Activated CD4-positive, alpha-beta T cell treated with anti-CD3 and anti-CD28 coated beads for 36 hours (primary cell): ENCODE measurements at regions of chr3 and their contacts with region 1.

Region 1: GRCh38 chr3:98657457-98657856 is 64.0 kb upstream of the CPOX start:
- DNase-seq: peak; percentile 79
- ATAC-seq: peak; percentile 88
- H3K4me3 Mint-ChIP-seq: no peak overlapping the region
- H3K27ac Mint-ChIP-seq: no peak overlapping the region
- H3K4me1 Mint-ChIP-seq: peaks cover 3% of the 10 kb centered on the region
- H3K27me3 Mint-ChIP-seq: peaks cover 16% of the 10 kb centered on the region

Region 2: DNA sequence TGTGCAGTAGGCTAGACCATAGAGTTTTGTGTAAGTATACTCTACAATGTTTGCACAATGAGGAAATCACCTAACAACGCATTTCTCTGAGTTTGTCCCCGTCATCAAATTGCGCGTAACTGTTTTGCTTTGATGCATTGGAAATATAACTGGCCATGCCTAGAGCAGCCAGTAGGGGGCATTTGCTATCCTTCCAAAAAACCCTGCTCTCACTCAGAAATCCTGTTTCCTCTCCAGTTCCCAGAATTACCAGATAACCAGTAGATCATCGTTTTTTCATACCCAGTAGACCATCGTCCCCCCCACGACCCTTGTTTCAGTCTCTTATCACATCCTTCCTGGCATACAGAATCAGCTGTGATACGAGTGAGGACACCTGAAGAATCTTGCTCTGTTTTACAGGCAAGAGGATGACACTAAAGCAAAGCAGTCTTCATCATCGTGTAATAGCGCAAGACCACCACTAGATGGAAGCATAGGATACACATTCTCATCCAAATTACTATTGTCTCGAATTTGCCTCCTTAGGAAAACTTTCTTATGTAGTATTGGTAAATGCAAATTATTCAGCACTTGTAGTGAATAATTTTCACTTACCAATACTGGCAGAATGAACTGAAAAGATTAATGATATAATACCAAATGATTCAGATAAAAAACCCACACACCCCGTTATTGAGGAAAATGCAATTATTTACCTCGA is 618.0 kb before region 1 on chr3:
- CTCF ChIA-PET with region 1: no interaction called
- POLR2A ChIA-PET with region 1: no interaction called
- intact Hi-C with region 1: loop called in 1 of 2 experiments (anchors 1 kb)
- DNase-seq: peak; percentile 84
- ATAC-seq: peak; percentile 88
- H3K4me3 Mint-ChIP-seq: peak overlapping the region; percentile 76
- H3K27ac Mint-ChIP-seq: peak overlapping the region; percentile 97
- H3K4me1 Mint-ChIP-seq: peaks cover 12% of the 10 kb centered on the region
- H3K27me3 Mint-ChIP-seq: peaks cover 4% of the 10 kb centered on the region

Region 3: DNA sequence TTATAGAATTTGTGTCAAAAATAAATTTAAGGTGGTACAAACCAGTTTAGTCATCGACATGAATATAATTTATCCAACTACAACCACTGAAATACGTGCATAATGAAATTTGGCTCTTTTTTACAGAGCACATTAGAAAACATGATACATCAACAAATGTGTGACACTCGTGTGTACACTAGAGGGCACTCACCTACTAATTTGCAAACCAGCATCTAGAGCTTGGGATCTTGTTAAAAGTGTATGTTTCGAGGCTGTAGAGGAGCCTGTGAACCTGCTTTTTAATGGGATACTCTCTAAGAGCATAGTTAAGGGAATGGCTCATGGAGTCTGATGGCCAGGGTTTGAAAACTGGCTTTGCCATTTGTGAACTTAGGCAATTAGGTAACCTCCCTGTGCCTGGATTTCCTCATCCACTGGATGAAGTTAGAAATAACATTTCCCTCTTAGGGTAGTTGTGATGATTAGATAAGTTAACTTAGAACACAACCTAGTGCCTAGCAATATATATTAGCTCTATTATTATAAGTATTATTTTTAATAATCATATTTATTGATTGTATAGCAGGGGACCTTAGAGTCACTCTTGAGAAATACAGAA is 55.3 kb before region 1 on chr3:
- CTCF ChIA-PET with region 1: interaction called, 16 read pairs
- POLR2A ChIA-PET with region 1: no interaction called
- intact Hi-C with region 1: loop called (anchors 1 to 2 kb)
- DNase-seq: peak; percentile 30
- ATAC-seq: peak; percentile 78
- H3K4me3 Mint-ChIP-seq: no peak overlapping the region
- H3K27ac Mint-ChIP-seq: no peak overlapping the region
- H3K4me1 Mint-ChIP-seq: peaks cover 4% of the 10 kb centered on the region
- H3K27me3 Mint-ChIP-seq: peaks cover 2% of the 10 kb centered on the region

Region 4: DNA sequence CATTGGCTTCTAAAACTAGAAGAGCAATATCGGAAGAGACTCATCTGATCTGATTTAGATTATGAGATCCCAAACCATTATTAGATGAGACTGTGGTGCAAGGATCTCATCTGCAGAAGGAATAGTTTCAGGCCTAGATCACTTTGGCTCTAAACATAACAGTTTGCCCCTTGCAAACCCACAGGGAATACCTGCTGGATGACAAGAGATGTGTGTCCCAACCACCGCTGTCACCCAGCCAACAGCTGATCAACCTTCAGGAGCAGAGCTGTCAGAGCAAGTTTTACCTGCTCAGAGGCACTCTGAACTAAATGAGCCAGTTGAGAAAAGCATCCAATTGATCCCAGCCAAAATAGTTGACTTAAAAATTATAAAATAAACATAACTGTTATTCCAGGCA is 41.7 kb after region 1 on chr3:
- CTCF ChIA-PET with region 1: no interaction called
- POLR2A ChIA-PET with region 1: no interaction called
- intact Hi-C with region 1: loop called in 1 of 2 experiments (anchors 2 kb)
- DNase-seq: no peak
- ATAC-seq: no peak
- H3K4me3 Mint-ChIP-seq: no peak overlapping the region
- H3K27ac Mint-ChIP-seq: no peak overlapping the region
- H3K4me1 Mint-ChIP-seq: no peaks in the 10 kb centered on the region
- H3K27me3 Mint-ChIP-seq: no peaks in the 10 kb centered on the region